Activated CD8-positive, alpha-beta T cell treated with anti-CD3 and anti-CD28 coated beads, Interleukin-2, amount 10 ng/mL, durations not matched to agents 7 days and 5 days (primary cell): ENCODE measurements at regions of chr9 and their contacts with region 1.

Region 1: DNA sequence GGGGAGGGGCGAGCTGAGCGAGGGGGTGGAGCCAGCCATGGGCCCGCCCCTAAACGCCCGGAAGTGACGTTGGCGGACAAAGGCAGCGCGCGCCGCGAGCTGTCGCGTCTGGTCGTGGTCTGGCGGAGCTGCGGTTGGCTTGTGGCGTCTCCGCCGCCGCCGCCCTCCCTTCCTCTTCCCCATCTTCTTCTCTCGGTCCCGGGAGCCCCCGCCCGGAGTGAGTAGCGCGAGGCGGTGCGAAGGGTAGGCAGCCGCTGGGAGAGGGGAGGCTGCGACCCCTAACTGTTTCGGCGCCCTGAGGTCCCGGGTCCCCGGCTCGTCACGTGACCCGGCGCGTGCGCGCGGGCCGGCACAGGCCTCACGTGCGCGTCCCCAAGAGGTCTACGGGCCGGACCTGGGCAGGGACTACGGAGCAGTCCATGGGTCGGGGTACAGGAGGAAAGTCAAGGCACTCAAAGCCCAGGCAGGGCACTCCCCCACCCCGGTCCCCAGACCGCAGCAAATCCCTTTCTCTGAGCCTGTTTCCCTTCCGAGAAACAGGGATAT is at the start of gene NTMT1:
- DNase-seq: peak; percentile 92
- ATAC-seq: peak; percentile 70
- H3K4me3 Mint-ChIP-seq: peak within 1 kb of the TSS; percentile 80
- H3K27ac Mint-ChIP-seq: peak within 1 kb of the TSS; percentile 88
- H3K4me1 Mint-ChIP-seq: peaks cover 54% of the 10 kb centered on the region
- H3K27me3 Mint-ChIP-seq: peaks cover 5% of the 10 kb centered on the region
- total RNA-seq, gene NTMT1: 36.2 to 39.2 TPM

Region 2: GRCh38 chr9:129131300-129132145 is 494.6 kb before region 1 on chr9:
- CTCF ChIA-PET with region 1: interaction called, 176 read pairs
- POLR2A ChIA-PET with region 1: no interaction called
- DNase-seq: peak; percentile 89
- ATAC-seq: peak; percentile 97
- H3K4me3 Mint-ChIP-seq: no peak overlapping the region
- H3K27ac Mint-ChIP-seq: no peak overlapping the region
- H3K4me1 Mint-ChIP-seq: peaks cover 7% of the 10 kb centered on the region
- H3K27me3 Mint-ChIP-seq: no peaks in the 10 kb centered on the region

Region 3: GRCh38 chr9:129237195-129237611 is 388.9 kb before region 1 on chr9:
- CTCF ChIA-PET with region 1: interaction called, 10 read pairs
- POLR2A ChIA-PET with region 1: no interaction called
- DNase-seq: peak; percentile 64
- ATAC-seq: peak; percentile 59
- H3K4me3 Mint-ChIP-seq: peak overlapping the region; percentile 74
- H3K27ac Mint-ChIP-seq: peak overlapping the region; percentile 88
- H3K4me1 Mint-ChIP-seq: peaks cover 64% of the 10 kb centered on the region
- H3K27me3 Mint-ChIP-seq: no peaks in the 10 kb centered on the region

Region 4: DNA sequence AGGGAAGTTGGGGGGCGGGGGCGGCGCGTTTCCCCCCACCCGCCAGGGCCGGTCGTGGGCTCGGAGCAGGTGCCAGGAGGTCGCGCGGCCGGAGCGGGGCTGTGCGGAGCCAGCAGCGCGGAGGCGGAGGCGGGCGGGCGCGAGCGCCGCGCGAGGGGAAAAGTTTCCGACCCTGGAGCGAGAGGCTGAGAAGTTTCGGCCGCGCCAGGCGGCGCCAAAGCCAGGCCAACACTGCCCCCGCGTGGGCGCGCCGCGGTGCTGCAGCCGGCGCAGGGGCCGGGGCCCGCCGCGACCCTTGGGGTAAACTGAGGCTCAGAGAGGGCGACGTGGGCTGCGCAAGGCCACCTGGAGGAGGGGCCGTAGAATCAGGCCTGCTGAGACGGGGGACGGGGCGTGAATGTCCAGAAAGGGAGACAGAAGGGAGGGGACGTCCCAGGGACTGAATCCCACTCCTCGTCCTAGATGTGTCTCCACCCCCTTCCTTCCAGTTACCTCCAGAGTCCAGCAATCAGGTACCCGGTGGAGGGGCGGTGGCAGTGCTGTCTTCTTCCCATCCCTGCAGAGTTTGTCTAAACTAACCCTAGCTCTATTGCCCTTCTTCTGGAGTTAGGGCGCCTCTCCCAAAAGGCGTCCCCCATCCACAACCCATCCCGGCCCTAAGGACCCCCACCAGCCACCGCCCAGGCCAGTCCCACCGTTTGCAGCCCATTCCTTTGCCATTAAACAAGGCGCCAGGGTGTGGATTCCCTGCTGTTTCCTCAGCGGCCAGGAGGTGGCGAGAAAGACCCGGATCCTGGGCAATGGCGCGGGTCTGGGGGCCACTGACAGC is 15.5 kb before region 1 on chr9:
- CTCF ChIA-PET with region 1: interaction called, 81 read pairs
- POLR2A ChIA-PET with region 1: no interaction called
- DNase-seq: peak; percentile 79
- ATAC-seq: peak; percentile 78
- H3K4me3 Mint-ChIP-seq: peak overlapping the region; percentile 58
- H3K27ac Mint-ChIP-seq: peak overlapping the region; percentile 43
- H3K4me1 Mint-ChIP-seq: peaks cover 49% of the 10 kb centered on the region
- H3K27me3 Mint-ChIP-seq: peaks cover 2% of the 10 kb centered on the region